Activated CD4-positive, alpha-beta memory T cell treated with anti-CD3 and anti-CD28 coated beads, Interleukin-2, amount 10 ng/mL, durations not matched to agents 7 days and 5 days (primary cell): ENCODE measurements at regions of chr5 and their contacts with region 1.

Region 1: DNA sequence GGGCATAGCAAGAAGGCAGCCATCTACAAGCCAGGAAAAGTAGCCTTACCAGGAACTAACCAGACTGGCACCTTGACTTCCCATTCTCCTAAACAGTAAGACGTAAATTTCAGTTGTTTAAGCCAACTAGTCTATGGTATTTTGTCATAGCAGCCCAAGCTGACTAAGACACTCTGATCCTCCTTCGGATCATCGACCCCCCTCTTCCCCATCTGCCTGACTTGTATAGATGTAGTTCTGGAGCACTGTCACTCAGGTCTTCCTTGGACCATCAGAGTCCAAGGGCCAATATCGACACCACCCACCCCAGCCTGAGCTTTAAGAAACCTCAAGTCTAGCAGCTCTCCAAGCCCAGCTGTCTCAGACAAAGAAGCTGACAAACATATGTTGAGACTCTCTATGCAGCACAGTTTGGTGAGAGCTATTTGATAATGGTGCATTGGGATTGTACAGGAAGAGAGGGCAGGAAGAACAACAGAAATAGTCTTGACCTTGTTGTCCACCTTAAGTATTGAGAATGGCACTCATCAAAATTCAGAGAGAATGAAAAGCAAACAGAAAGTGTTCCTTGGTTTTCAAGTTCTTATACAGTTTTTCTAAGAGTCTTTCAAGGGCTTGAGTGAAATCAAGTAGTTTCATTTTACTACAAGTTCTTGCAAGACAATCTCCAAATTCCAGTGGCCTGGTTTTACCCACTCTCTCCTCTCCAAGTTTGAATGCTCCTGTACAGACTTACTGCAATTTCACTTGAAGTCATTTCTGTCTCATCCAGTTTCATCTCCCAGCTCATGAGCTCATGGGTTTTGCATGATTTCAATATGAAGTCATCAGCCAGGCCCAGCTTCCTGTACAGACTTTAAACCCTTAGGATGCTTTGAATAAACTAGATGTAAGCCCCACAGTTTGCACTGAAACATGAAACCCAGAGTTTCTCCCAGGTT is 122.3 kb upstream of the RAI14 start:
- DNase-seq: no peak
- H3K4me3 Mint-ChIP-seq: no peak overlapping the region
- H3K27ac Mint-ChIP-seq: no peak overlapping the region
- H3K4me1 Mint-ChIP-seq: peaks cover 4% of the 10 kb centered on the region
- H3K27me3 Mint-ChIP-seq: peaks cover 7% of the 10 kb centered on the region

Region 2: GRCh38 chr5:34522599-34523386 is 11.1 kb before region 1 on chr5:
- CTCF ChIA-PET with region 1: interaction called, 20 read pairs
- POLR2A ChIA-PET with region 1: no interaction called
- DNase-seq: peak; percentile 54
- H3K4me3 Mint-ChIP-seq: no peak overlapping the region
- H3K27ac Mint-ChIP-seq: no peak overlapping the region
- H3K4me1 Mint-ChIP-seq: no peaks in the 10 kb centered on the region
- H3K27me3 Mint-ChIP-seq: peaks cover 11% of the 10 kb centered on the region

Region 3: DNA sequence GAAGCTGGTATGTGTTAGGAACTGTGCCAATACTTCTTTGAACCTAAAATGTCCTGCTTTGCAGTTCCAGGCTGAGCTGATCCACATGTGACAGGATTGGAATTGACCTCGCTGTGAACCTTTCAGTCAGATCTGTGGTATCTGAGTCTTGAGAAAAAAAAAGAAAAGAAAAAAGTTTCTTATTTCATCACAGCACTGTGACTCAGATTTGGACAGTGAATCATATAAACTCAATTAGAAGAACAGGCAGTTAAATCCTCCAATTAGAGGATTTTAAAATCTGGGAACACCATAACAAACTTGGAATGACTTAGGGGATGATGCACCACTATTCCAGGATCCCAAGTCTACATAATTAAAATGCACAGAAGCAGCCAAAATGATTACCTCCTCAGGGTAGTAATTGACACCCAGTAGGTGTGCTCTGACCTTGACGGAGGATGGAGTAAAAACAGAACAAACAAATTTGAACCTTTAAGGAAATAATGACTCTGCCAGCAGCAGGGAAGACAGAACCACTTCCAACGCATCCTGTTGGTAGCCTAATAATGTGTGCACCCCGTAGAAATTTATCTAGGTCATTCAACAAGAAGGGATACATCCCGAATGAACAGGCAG is 64.4 kb after region 1 on chr5:
- CTCF ChIA-PET with region 1: no interaction called
- POLR2A ChIA-PET with region 1: no interaction called
- DNase-seq: no peak
- H3K4me3 Mint-ChIP-seq: no peak overlapping the region
- H3K27ac Mint-ChIP-seq: no peak overlapping the region
- H3K4me1 Mint-ChIP-seq: no peaks in the 10 kb centered on the region
- H3K27me3 Mint-ChIP-seq: peaks cover 3% of the 10 kb centered on the region

Region 4: DNA sequence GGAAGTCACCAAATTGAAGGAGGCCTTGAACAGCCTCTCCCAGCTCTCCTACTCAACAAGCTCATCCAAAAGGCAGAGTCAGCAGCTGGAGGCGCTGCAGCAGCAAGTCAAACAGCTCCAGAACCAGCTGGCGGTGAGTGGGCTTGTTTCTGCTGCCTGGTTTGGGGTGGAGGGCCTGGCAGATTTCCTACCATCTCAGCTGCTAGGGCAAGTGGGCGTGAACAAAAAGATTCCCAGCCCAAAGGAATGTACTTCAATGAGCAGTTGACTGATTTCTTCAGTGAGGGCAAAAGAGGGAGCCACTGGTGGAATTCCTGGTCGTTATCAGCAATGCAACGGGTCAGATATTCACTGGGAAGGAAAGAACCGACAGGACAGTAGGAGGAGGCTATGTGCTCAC is 292.5 kb after region 1 on chr5:
- CTCF ChIA-PET with region 1: no interaction called
- POLR2A ChIA-PET with region 1: no interaction called
- DNase-seq: no peak
- H3K4me3 Mint-ChIP-seq: no peak overlapping the region
- H3K27ac Mint-ChIP-seq: no peak overlapping the region
- H3K4me1 Mint-ChIP-seq: no peaks in the 10 kb centered on the region
- H3K27me3 Mint-ChIP-seq: no peaks in the 10 kb centered on the region